Common myeloid progenitor, CD34-positive (primary cell): ENCODE measurements at regions of chr19 and their contacts with region 1.

Region 1: GRCh38 chr19:43651758-43652545 is 12.3 kb upstream of the CADM4 start:
- DNase-seq: peak; percentile 63 to 82 (median 79)
- H3K4me3 ChIP-seq: peak overlapping the region in 1 of 7 experiments; percentile 28
- H3K27ac ChIP-seq: no peak overlapping the region
- H3K4me1 ChIP-seq: no peaks in the 10 kb centered on the region
- H3K27me3 ChIP-seq: no peaks in the 10 kb centered on the region

Region 2: GRCh38 chr19:43662487-43662886 is 10.5 kb after region 1 on chr19:
- CTCF ChIA-PET with region 1: interaction called, 17 read pairs
- POLR2A ChIA-PET with region 1: no interaction called
- DNase-seq: no peak
- H3K4me3 ChIP-seq: no peak overlapping the region
- H3K27ac ChIP-seq: no peak overlapping the region
- H3K4me1 ChIP-seq: peaks cover 10 to 29% (median 23%) of the 10 kb centered on the region in 4 experiments
- H3K27me3 ChIP-seq: no peaks in the 10 kb centered on the region

Region 3: DNA sequence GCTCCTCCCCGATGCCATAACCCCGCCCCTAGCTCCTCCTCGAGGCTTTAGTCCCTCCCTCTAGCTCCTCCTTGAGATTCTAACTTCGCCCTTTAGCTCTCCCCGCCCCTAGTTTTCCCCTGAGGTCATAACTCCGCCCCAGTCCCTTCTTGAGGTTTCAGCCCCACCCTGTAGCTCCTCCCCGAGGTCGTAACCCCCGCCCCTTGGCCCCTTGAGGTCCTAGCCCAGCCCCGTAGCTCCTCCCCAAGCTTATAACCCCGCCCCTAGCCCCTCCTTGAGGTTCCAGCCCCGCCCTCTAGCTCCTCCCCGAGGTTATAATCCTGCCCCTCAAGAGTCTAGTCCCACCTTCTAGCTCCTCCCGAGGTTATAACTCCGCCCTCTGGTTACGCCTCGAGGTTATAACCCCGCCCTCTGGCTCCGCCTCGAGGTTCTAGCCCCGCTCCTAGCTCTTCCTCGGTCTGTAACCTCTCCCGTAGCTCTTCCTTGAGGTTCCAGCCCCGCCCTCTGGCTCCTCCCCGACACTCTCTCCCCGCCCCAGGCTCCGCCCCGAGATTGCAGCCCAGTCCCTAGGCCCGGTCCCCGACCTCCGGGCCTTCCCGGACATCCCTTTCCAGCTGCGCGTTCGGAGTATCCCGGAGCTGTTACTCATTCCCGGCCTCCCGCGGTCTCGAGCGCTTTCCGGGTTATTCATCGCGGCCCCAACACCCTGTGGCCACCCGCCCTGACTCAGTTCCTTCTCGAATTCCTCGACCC is 16.6 kb after region 1 on chr19:
- CTCF ChIA-PET with region 1: interaction called, 17 read pairs
- POLR2A ChIA-PET with region 1: interaction called, 3 read pairs
- DNase-seq: peak; percentile 98 to 99 (median 99)
- H3K4me3 ChIP-seq: peak overlapping the region; percentile 38 to 84 (median 73)
- H3K27ac ChIP-seq: peak overlapping the region in 1 of 2 experiments; percentile 64
- H3K4me1 ChIP-seq: peaks cover 13 to 57% (median 44%) of the 10 kb centered on the region in 4 experiments
- H3K27me3 ChIP-seq: no peaks in the 10 kb centered on the region